ENCODE measurements at regions of chr19 and their contacts with region 1.

Region 1: DNA sequence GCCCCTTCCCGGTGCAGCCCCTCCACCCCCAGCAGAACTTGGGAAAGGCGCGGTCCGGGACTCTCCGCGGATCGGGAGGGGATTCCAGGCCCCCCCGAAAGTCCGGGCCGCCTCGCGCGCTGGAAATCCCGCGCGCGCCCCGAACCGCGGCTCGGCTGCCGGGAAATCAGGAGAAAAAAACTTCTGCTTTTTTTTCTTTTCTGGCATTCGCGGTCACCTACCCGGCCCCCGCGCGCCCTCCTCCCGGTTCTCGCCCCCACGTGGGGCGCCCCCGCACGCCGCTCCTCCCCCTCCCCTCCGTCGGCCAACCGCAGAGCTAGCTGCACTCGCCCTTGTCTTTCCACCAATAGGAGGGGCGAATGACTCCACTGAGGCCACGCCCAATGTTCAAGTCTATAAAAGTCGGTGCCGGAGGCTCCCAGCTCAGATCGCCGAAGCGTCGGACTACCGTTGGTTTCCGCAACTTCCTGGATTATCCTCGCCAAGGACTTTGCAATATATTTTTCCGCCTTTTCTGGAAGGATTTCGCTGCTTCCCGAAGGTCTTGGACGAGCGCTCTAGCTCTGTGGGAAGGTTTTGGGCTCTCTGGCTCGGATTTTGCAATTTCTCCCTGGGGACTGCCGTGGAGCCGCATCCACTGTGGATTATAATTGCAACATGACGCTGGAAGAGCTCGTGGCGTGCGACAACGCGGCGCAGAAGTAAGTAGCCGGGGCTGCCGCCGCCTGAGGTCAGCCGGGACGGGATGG is at the start of gene GADD45B:
- DNase-seq: peak; percentile 97
- H3K4me3 Mint-ChIP-seq: peak within 1 kb of the TSS; percentile 93
- H3K27ac Mint-ChIP-seq: peak within 1 kb of the TSS; percentile 91
- H3K4me1 Mint-ChIP-seq: peaks cover 16% of the 10 kb centered on the region
- H3K27me3 Mint-ChIP-seq: no peaks in the 10 kb centered on the region
- total RNA-seq, gene GADD45B: 129 and 132 TPM in 2 replicates

Region 2: DNA sequence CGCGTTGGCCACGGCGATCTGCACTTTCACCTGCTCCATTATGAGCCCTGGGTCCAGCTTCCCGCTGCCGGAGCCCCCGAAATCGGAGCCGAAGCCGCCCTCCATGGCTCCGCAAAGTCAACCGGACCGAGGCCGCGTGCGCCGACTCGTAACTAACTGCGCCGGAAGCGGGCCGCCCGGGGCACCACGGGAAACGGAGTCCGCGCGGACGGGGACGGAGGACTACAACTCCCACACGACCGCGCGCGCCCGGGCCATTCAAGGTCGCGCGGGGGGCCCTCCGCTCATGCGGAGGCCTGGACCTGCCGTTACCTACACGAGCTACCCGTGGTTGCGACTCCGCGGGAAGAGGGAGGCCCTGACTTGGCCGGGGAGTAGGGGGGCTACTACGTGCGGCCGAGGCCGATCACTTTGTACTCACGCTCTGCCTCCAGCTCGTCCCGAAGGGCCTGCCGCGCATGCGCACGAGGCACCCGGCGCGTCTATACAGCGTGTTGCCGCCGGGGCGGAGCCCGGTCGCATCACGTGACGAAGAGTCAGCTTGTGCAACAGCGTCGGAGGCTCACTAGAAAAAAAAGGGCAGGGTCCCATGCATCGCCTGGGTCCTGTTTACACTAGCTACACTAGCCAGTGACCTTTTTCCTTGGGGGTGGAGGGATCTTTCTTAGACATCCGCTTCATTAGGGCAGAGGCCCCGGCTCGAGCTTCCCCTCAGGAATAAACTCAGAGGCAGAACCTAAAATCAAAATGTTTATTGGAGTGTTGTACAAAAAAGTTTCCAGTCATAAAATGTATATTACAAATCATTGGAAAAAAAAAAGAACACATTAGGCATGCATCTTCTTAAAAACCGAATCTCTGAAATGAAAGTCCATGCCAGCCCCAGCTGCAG is 48.2 kb before region 1 on chr19 and contains the start of gene TIMM13:
- intact Hi-C with region 1: loop called (anchors 1 kb)
- DNase-seq: peak; percentile 96
- H3K4me3 Mint-ChIP-seq: peak within 1 kb of the TSS; percentile 95
- H3K27ac Mint-ChIP-seq: peak within 1 kb of the TSS; percentile 98
- H3K4me1 Mint-ChIP-seq: peaks cover 11% of the 10 kb centered on the region
- H3K27me3 Mint-ChIP-seq: peaks cover 2% of the 10 kb centered on the region
- total RNA-seq, gene TIMM13: 178 and 185 TPM in 2 replicates

Region 3: DNA sequence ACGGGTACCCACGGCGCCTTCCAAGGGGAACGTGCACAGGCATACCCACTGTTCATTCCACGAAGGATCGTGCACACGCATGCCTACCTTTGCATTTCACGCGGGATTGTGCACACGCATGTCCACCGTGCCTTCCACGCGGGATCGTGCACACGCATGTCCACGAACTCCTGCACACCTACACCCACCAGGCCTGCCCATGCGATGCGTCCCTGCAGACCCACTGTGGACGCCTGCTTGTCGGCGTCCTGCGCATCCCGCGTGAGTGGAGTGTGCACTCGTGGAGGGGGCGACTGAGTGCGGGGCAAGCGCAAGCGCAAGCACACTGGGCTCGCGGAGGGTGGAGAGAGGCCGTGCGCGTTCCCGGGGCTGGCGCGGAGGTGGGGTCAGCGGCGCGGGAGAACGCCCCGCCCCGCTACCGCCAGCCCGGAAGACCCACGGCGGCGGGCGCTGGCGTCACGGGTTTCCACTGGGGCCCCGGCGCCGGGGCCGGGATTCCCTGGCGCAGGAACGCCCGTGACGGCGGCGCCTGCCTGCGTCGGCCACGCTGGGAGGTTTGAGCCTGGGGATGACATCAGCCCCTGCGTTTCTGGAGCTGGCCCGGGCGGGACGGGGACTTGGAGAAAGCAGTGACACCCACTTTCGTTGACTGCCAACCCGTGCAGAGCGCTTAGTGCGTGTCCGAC is 18.7 kb after region 1 on chr19:
- intact Hi-C with region 1: loop called (anchors 2 kb)
- DNase-seq: peak; percentile 47
- H3K4me3 Mint-ChIP-seq: peak overlapping the region; percentile 59
- H3K27ac Mint-ChIP-seq: no peak overlapping the region
- H3K4me1 Mint-ChIP-seq: peaks cover 21% of the 10 kb centered on the region
- H3K27me3 Mint-ChIP-seq: peaks cover 32% of the 10 kb centered on the region

Region 4: GRCh38 chr19:2561895-2562294 is 86.0 kb after region 1 on chr19:
- intact Hi-C with region 1: loop called (anchors 1 kb)
- DNase-seq: peak; percentile 75
- H3K4me3 Mint-ChIP-seq: peak overlapping the region; percentile 79
- H3K27ac Mint-ChIP-seq: peak overlapping the region; percentile 92
- H3K4me1 Mint-ChIP-seq: peaks cover 43% of the 10 kb centered on the region
- H3K27me3 Mint-ChIP-seq: no peaks in the 10 kb centered on the region

Region 5: GRCh38 chr19:2610637-2611482 is 135.0 kb after region 1 on chr19:
- intact Hi-C with region 1: loop called (anchors 1 kb)
- DNase-seq: peak; percentile 79
- H3K4me3 Mint-ChIP-seq: peak overlapping the region; percentile 85
- H3K27ac Mint-ChIP-seq: peak overlapping the region; percentile 75
- H3K4me1 Mint-ChIP-seq: peaks cover 39% of the 10 kb centered on the region
- H3K27me3 Mint-ChIP-seq: peaks cover 12% of the 10 kb centered on the region

Region 6: GRCh38 chr19:2636897-2637683 is 161.2 kb after region 1 on chr19:
- intact Hi-C with region 1: loop called (anchors 1 kb)
- DNase-seq: peak; percentile 61
- H3K4me3 Mint-ChIP-seq: no peak overlapping the region
- H3K27ac Mint-ChIP-seq: peak overlapping the region; percentile 34
- H3K4me1 Mint-ChIP-seq: peaks cover 6% of the 10 kb centered on the region
- H3K27me3 Mint-ChIP-seq: peaks cover 17% of the 10 kb centered on the region

Region 7: GRCh38 chr19:2782936-2783780 is 307.3 kb after region 1 on chr19 and contains the start of gene SGTA:
- intact Hi-C with region 1: loop called (anchors 10 kb)
- DNase-seq: peak; percentile 96
- H3K4me3 Mint-ChIP-seq: peak within 1 kb of the TSS; percentile 98
- H3K27ac Mint-ChIP-seq: peak within 1 kb of the TSS; percentile 89
- H3K4me1 Mint-ChIP-seq: peaks cover 62% of the 10 kb centered on the region
- H3K27me3 Mint-ChIP-seq: no peaks in the 10 kb centered on the region
- total RNA-seq, gene SGTA: 73.4 and 77.8 TPM in 2 replicates

Measured in activated T-helper 1 cell treated with anti-CD3 and anti-CD28 coated beads, Interleukin-12 subunit alpha, Interleukin-12 subunit beta, Interleukin-2, Interleukin-4 antibody, amounts not matched to agents 30 ng/mL and 10 ng/mL and 1 ng/mL, durations not matched to agents 14 hours and 24 hours and 36 hours (primary cell).